Dorsolateral prefrontal cortex (tissue), 120 donors: ENCODE measurements at regions of chr22 and their contacts with region 1.

Region 1: DNA sequence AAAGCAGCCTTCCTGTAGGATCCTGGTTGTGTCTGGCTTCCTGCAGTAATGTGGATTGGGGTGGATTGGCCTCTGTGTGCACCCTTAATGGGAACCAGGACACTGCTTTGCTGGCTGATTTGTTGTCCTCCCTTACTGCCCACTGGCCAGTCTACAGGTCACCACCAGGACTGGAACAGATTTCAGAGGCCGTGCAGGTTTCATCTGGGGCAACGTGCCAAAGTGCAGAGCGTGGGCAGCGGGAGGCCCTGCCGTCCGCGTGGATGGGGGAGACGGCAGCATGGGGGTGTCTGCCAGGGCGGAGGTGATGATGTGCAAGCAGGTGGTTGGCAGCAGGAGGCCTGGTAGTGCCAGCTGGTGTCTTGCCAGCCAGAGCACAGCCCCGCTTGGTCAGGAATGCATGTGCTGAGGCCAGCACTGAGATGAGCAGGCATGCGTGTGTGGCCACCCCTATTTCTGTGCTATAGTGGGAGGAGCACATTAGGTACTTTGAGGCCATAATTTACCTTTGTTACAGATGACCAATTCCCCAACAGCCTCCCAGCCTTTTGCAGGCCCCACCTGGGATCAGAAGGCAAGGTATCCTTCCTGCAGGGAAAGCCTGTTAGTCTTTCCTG is 24.3 kb downstream of the BCR start:
- DNase-seq: peak in 2 of 10 donors; percentile 52 to 93
- H3K4me3 ChIP-seq: peak overlapping the region in 1 of 59 donors; percentile 10
- H3K27ac ChIP-seq: peak overlapping the region in 48 of 59 donors; percentile 4 to 75 (median 48)
- H3K27me3 ChIP-seq: no peaks in the 10 kb centered on the region
- CTCF ChIP-seq: no peak

Region 2: GRCh38 chr22:23237201-23237798 is 32.7 kb after region 1 on chr22:
- intact Hi-C with region 1: loop called in 1 of 2 experiments (anchors 5 kb)
- DNase-seq: peak; percentile 43 to 92 (median 84)
- H3K4me3 ChIP-seq: peak overlapping the region in 3 of 59 donors; percentile 13 to 24 (median 16)
- H3K27ac ChIP-seq: peak overlapping the region in 41 of 59 donors; percentile 5 to 82 (median 51)
- H3K27me3 ChIP-seq: no peaks in the 10 kb centered on the region
- CTCF ChIP-seq: no peak

Region 3: DNA sequence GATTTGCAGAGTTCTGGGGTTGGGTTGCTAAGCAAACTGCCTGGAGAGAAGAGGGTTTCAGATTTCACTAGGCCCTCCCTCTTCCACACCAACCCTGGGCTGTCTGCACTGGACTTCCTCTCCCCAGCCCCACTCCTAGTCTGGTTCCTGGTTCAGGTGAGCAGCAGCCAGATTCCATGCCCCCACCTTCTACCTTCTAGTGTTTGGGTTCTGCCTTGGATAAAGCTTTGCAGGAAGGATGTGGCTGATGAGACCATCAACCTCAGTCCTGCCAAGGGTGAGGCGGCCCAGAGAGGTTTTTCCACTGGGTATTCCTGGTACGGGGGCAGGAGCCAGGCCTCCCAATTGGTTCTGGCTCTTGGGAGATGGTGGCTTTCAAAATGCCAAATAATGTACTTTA is 43.9 kb after region 1 on chr22:
- intact Hi-C with region 1: no loop called
- DNase-seq: no peak
- H3K4me3 ChIP-seq: no peak overlapping the region
- H3K27ac ChIP-seq: no peak overlapping the region
- H3K27me3 ChIP-seq: no peaks in the 10 kb centered on the region
- CTCF ChIP-seq: no peak